Activated B cell treated with CpG ODN at 0.5 μM for 24 hours (primary cell): ENCODE measurements at regions of chr7 and their contacts with region 1.

Region 1: DNA sequence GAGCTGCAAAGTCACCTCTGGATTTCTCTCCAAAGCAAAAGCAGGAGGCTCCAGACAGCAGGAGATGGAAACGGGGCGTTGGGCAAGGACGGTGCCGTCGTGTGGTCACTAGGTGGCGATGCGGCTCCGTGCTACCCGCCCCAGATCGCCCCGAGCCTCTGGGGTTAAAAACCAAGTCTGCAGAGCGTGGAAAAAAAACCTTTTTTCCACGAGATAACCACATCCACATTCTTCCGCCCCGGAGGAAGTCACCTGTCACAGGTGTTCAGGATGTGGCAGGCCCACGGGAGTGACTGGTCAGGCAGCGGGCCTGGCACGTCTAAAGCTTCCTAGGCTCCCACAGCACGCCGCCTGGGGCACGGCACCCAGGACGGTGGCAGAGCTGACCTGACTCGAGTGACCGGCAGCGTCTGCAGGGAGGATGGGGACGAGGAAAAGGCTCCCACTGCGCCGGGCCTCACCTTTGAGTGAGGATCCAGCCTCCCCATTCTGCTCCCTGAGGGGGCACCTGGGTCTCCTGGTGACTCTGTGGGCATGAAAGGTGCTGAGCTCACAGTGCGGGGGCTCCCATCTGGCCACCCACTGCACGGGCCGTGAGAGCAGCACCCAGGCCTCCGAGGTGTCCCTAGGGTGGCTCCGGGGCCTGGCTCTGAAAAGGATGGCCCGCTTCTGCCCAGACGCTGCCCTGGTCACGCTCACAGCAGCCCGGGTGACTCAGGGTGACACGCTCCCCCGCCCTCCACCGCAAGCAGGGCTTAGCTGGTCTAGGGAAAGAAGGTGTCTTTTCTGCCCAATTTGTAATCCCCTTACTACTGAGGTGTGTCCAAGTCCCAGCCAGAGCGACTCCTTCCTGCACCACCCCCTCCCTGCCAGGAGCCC is 71.3 kb upstream of the TNRC18 start:
- DNase-seq: peak; percentile 71
- ATAC-seq: peak; percentile 82
- H3K4me3 Mint-ChIP-seq: peak overlapping the region; percentile 71
- H3K27ac Mint-ChIP-seq: no peak overlapping the region
- H3K4me1 Mint-ChIP-seq: peaks cover 21% of the 10 kb centered on the region
- H3K27me3 Mint-ChIP-seq: no peaks in the 10 kb centered on the region
- CTCF ChIP-seq: peak; percentile 42

Region 2: DNA sequence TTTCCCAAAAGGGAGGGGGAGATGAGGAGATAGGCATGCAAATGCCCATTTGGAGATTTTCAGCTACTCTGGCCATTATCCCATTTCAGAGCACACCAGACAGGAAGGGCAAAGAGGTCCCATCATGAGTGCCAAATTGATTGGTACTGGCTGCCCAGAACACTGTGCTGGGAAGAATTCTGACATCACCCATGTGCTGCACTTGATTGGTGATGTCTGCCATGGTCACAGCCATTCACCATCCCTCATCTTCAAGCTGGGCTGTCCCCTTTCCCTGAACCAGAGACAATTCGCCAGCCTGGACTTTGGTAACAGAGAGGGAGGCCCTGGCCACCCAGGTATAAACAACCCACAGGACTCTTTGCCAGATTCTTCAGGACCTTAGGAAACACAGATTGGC is 588.2 kb before region 1 on chr7:
- CTCF ChIA-PET with region 1: no interaction called
- POLR2A ChIA-PET with region 1: no interaction called
- intact Hi-C with region 1: no loop called
- DNase-seq: no peak
- ATAC-seq: no peak
- H3K4me3 Mint-ChIP-seq: no peak overlapping the region
- H3K27ac Mint-ChIP-seq: no peak overlapping the region
- H3K4me1 Mint-ChIP-seq: no peaks in the 10 kb centered on the region
- H3K27me3 Mint-ChIP-seq: peaks cover 4% of the 10 kb centered on the region
- CTCF ChIP-seq: no peak

Region 3: GRCh38 chr7:5526100-5526905 is 31.4 kb after region 1 on chr7:
- CTCF ChIA-PET with region 1: interaction called, 3 read pairs
- POLR2A ChIA-PET with region 1: interaction called, 32 read pairs
- intact Hi-C with region 1: no loop called
- DNase-seq: peak; percentile 33
- ATAC-seq: no peak
- H3K4me3 Mint-ChIP-seq: peak overlapping the region; percentile 95
- H3K27ac Mint-ChIP-seq: peak overlapping the region; percentile 80
- H3K4me1 Mint-ChIP-seq: peaks cover 46% of the 10 kb centered on the region
- H3K27me3 Mint-ChIP-seq: no peaks in the 10 kb centered on the region
- CTCF ChIP-seq: no peak

Region 4: GRCh38 chr7:5591278-5591874 is 96.5 kb after region 1 on chr7:
- CTCF ChIA-PET with region 1: no interaction called
- POLR2A ChIA-PET with region 1: no interaction called
- intact Hi-C with region 1: no loop called
- DNase-seq: no peak
- ATAC-seq: no peak
- H3K4me3 Mint-ChIP-seq: peak overlapping the region; percentile 32
- H3K27ac Mint-ChIP-seq: no peak overlapping the region
- H3K4me1 Mint-ChIP-seq: peaks cover 38% of the 10 kb centered on the region
- H3K27me3 Mint-ChIP-seq: peaks cover 13% of the 10 kb centered on the region
- CTCF ChIP-seq: no peak

Region 5: DNA sequence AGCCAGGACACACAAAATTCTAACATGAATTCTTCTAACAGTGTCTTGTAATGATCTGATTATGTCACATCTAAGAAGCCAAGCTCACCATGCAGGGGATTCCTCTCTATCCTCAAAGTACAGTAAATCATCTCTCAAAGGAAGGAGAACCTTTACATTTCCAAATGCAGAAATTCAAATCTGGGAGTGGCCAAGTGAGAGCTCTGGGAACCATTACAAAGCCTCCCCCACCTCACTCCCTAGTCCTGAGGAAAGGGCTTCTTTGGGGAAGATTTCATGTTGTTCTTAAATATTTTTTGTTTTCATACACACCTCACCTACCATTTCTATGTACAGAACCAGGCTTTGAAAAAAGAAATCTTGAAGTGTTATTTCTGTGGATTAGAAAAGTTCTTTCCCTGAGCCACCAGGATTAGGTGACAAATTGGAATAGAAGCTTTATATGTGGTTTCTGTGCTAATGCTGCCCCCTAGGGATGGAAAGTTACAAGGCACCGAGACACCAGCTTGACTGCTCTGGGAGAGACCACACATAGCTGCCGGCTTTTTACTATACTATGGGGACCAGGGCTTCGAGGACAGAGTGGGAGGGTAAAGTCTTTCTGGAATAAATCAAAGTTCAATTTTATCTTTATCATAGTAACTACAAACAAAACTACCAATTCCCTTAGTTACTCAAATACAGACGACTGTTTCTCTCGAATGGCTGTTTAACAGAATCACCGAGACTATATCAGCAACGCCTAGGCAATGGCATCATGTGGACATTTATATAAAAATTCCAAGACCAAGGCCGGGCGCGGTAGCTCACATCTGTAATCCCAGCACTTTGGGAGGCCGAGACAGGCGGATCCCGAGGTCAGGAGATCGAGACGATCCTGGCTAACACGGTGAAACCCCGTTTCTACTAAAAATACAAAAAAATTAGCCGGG is 170.4 kb after region 1 on chr7:
- CTCF ChIA-PET with region 1: interaction called, 110 read pairs
- POLR2A ChIA-PET with region 1: interaction called, 8 read pairs
- intact Hi-C with region 1: loop called (anchors 1 kb)
- DNase-seq: no peak
- ATAC-seq: peak; percentile 71
- H3K4me3 Mint-ChIP-seq: no peak overlapping the region
- H3K27ac Mint-ChIP-seq: no peak overlapping the region
- H3K4me1 Mint-ChIP-seq: peaks cover 28% of the 10 kb centered on the region
- H3K27me3 Mint-ChIP-seq: no peaks in the 10 kb centered on the region
- CTCF ChIP-seq: no peak

Region 6: GRCh38 chr7:5704534-5704922 is 209.6 kb after region 1 on chr7:
- CTCF ChIA-PET with region 1: interaction called, 80 read pairs
- POLR2A ChIA-PET with region 1: no interaction called
- intact Hi-C with region 1: loop called (anchors 1 kb)
- DNase-seq: peak; percentile 49
- ATAC-seq: peak; percentile 31
- H3K4me3 Mint-ChIP-seq: no peak overlapping the region
- H3K27ac Mint-ChIP-seq: no peak overlapping the region
- H3K4me1 Mint-ChIP-seq: peaks cover 40% of the 10 kb centered on the region
- H3K27me3 Mint-ChIP-seq: no peaks in the 10 kb centered on the region
- CTCF ChIP-seq: peak; percentile 78

Region 7: GRCh38 chr7:5780801-5781496 is 286.0 kb after region 1 on chr7:
- CTCF ChIA-PET with region 1: interaction called, 5 read pairs
- POLR2A ChIA-PET with region 1: interaction called, 7 read pairs
- intact Hi-C with region 1: loop called (anchors 5 kb)
- DNase-seq: no peak
- ATAC-seq: peak; percentile 40
- H3K4me3 Mint-ChIP-seq: peak overlapping the region; percentile 88
- H3K27ac Mint-ChIP-seq: peak overlapping the region; percentile 80
- H3K4me1 Mint-ChIP-seq: peaks cover 41% of the 10 kb centered on the region
- H3K27me3 Mint-ChIP-seq: no peaks in the 10 kb centered on the region
- CTCF ChIP-seq: no peak